Activated CD4-positive, alpha-beta T cell treated with anti-CD3 and anti-CD28 coated beads, Interleukin-2, amount 10 ng/mL, durations not matched to agents 7 days and 5 days (primary cell): ENCODE measurements at regions of chr7 and their contacts with region 1.

Region 1: DNA sequence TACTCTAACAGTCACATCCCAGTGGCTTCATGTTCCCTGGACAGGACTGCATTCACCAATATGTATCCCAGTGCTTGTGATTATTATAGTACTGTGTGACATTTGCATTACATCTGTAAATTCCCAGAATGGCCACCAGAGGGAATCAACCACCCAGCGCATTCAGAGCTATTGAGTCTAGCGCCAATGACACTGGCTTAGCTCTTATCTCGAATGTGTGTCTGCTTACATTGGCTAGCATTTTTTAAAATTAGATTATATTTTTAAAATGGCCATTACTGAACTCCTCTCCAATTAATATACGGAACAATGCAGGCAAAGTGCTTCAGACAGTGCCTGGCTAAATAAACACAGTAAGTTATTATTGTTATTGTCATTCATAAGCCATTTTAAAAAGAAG is 36.3 kb downstream of the TRIL start:
- DNase-seq: peak; percentile 58
- H3K4me3 Mint-ChIP-seq: no peak overlapping the region
- H3K27ac Mint-ChIP-seq: no peak overlapping the region
- H3K4me1 Mint-ChIP-seq: peaks cover 13% of the 10 kb centered on the region
- H3K27me3 Mint-ChIP-seq: peaks cover 11% of the 10 kb centered on the region

Region 2: GRCh38 chr7:28908775-28909174 is 13.0 kb before region 1 on chr7:
- CTCF ChIA-PET with region 1: no interaction called
- POLR2A ChIA-PET with region 1: no interaction called
- DNase-seq: no peak
- H3K4me3 Mint-ChIP-seq: no peak overlapping the region
- H3K27ac Mint-ChIP-seq: no peak overlapping the region
- H3K4me1 Mint-ChIP-seq: no peaks in the 10 kb centered on the region
- H3K27me3 Mint-ChIP-seq: peaks cover 6% of the 10 kb centered on the region

Region 3: DNA sequence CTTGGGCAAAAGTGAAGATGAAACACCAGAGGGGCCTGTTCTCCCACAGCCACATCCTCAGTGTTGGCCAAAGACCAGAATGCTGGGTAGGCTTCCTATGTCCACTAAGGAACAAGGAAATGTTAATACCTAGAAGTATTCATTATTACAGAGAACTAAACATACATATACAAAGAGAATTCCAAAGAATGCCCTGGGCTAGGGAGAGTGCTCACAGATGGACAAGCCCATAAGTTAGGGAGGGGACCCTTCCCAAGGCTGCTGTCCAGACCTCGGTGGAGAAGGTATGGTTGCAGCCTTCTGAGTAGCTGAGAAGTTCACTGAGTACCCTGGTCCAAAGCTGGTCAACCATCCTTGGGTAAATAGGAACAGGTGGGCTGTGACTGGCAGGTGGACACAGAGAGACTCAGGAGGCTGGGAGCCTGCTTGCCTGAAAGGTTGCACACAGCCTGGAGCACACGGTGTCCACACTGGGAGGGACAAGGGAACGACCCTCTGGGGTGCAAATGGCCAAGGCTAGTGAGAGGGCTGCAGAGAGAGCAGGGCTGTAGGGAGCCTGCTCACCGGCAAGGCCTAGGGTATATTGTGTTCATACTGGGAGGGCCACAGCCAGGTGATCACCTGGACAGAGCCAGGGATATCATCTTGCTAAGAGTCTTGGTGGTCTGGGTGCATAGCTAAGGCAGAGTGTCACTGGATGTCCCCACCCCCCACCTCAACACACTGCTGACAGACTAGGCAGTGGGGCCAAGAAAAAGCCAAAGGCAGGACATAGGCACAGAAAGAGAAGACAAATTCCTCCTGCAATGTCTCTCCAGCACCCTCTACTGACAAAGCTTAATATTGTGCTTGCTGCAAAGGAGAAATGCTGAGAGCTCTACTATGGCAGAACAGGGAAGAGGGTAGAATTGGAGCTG is 184.2 kb after region 1 on chr7:
- CTCF ChIA-PET with region 1: interaction called, 10 read pairs
- POLR2A ChIA-PET with region 1: no interaction called
- DNase-seq: peak; percentile 59
- H3K4me3 Mint-ChIP-seq: no peak overlapping the region
- H3K27ac Mint-ChIP-seq: no peak overlapping the region
- H3K4me1 Mint-ChIP-seq: peaks cover 4% of the 10 kb centered on the region
- H3K27me3 Mint-ChIP-seq: peaks cover 14% of the 10 kb centered on the region